ENCODE measurements at regions of chr10 and their contacts with region 1.

Region 1: DNA sequence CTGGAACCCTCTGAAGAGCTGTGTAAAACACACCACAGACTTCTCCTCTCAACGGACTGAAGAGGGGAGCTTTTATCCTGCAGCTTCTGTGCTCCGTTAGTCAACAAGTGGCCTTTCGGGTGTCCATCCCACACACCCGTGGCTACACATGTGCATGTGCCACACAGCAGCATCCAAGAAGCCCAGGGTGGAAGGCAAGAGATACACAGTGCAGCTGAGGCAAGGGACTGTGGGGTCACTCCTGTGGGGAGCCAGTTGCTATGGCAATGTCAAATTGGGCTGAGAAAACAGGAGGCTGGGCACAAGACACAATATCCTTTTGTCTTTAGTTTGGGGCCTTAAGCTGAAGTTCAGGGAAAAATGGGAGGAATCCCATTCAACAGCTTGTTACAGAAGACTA is 28.7 kb downstream of the NET1 start:
- DNase-seq: no peak
- H3K4me3 ChIP-seq: no peak overlapping the region
- H3K27ac ChIP-seq: no peak overlapping the region
- H3K4me1 ChIP-seq: peaks cover 14% of the 10 kb centered on the region
- CTCF ChIP-seq: no peak

Region 2: GRCh38 chr10:5605040-5605360 is 163.9 kb after region 1 on chr10:
- CTCF ChIA-PET with region 1: no interaction called
- POLR2A ChIA-PET with region 1: interaction called, 11 read pairs
- intact Hi-C with region 1: no loop called
- DNase-seq: no peak
- H3K4me3 ChIP-seq: no peak overlapping the region
- H3K27ac ChIP-seq: no peak overlapping the region
- H3K4me1 ChIP-seq: no peaks in the 10 kb centered on the region
- CTCF ChIP-seq: no peak

Measured in OCI-LY7 (cell line).